PC-9 (cell line): ENCODE measurements at regions of chr11 and their contacts with region 1.

Region 1: DNA sequence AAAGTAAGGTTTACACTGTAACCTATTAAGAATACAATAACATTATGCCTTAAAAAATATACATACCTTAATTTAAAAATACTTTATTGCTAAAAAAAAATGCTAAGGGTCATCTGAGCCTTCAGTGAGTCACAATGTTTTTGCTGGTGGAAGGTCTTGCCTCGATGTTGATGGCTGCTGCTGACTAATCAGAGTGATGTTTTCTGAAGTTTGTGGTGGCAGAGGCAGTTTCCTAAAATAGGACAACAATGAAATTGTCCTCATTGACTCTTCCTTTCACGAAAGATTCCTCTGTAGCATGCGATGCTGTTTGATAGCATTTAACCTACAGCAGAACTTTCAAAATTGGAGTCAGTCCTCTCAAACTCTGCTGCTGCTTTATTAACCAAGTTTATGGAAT is 97.6 kb downstream of the FAT3 start:
- DNase-seq: no peak
- H3K4me3 ChIP-seq: no peak overlapping the region
- H3K27ac ChIP-seq: no peak overlapping the region
- H3K4me1 ChIP-seq: peaks cover 12% of the 10 kb centered on the region; the same call in 1 of the 2 replicates
- H3K27me3 ChIP-seq: no peaks in the 10 kb centered on the region
- CTCF ChIP-seq: no peak

Region 2: DNA sequence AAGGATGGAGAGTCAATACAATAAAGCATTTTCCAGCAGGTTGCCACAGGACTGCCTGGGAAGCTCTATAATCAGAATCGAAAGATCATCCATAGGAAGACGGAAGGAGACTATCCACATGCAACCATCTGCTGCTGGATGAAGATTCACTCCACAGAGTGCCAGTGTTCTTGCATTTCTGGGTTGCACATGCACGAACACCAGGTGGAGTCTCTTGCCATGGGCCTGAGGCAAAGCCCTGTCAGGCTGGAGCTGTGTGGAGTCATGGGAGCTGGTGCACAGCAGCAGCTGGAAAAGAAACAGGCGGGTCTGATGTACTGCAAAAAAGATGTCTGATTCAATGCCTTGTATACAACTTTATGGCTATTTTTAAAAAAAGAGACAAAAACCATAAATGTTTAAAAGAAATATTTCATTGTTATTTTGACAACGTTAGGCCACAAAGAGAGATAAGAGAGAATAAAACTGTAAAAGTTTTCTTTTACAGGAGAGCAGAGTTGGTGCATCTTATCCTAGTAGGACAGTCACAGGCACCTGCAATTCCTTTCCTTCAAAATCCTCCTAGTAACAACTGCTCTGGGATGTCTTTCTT is 110.6 kb before region 1 on chr11:
- CTCF ChIA-PET with region 1: no interaction called
- POLR2A ChIA-PET with region 1: no interaction called
- intact Hi-C with region 1: no loop called
- DNase-seq: peak; percentile 18 to 45
- H3K4me3 ChIP-seq: no peak overlapping the region
- H3K27ac ChIP-seq: no peak overlapping the region
- H3K4me1 ChIP-seq: no peaks in the 10 kb centered on the region; the same call in 1 of the 2 replicates
- H3K27me3 ChIP-seq: no peaks in the 10 kb centered on the region
- CTCF ChIP-seq: peak; percentile 60

Region 3: GRCh38 chr11:92302770-92303169 is 19.5 kb before region 1 on chr11:
- CTCF ChIA-PET with region 1: no interaction called
- POLR2A ChIA-PET with region 1: interaction called, 14 read pairs
- intact Hi-C with region 1: no loop called
- DNase-seq: peak in 1 of 2 experiments; percentile 10
- H3K4me3 ChIP-seq: no peak overlapping the region
- H3K27ac ChIP-seq: no peak overlapping the region
- H3K4me1 ChIP-seq: peaks cover 11% of the 10 kb centered on the region; the same call in 1 of the 2 replicates
- H3K27me3 ChIP-seq: no peaks in the 10 kb centered on the region
- CTCF ChIP-seq: no peak

Region 4: GRCh38 chr11:92424281-92424680 is 102.1 kb after region 1 on chr11:
- CTCF ChIA-PET with region 1: no interaction called
- POLR2A ChIA-PET with region 1: no interaction called
- intact Hi-C with region 1: no loop called
- DNase-seq: no peak
- H3K4me3 ChIP-seq: no peak overlapping the region
- H3K27ac ChIP-seq: no peak overlapping the region
- H3K4me1 ChIP-seq: no peaks in the 10 kb centered on the region
- H3K27me3 ChIP-seq: no peaks in the 10 kb centered on the region
- CTCF ChIP-seq: no peak